ENCODE measurements at regions of chr16 and their contacts with region 1.

Region 1: GRCh38 chr16:55323637-55324490 is at the start of gene IRX6:
- DNase-seq: peak in 4 of 5 donors; percentile 65 to 91 (median 76)
- ATAC-seq: peak; percentile 71 to 85 (median 83)
- H3K4me3 ChIP-seq: peak within 1 kb of the TSS; percentile 30 to 70 (median 58)
- H3K27ac ChIP-seq: peak within 1 kb of the TSS; percentile 50 to 98 (median 92)
- H3K4me1 ChIP-seq: peaks cover 0 to 19% (median 1%) of the 10 kb centered on the region in 12 donors
- H3K27me3 ChIP-seq: peaks cover 0 to 66% (median 32%) of the 10 kb centered on the region in 9 donors
- CTCF ChIP-seq: peak; percentile 21 to 76 (median 62)
- POLR2A ChIP-seq: no peak
- total RNA-seq, gene IRX6: 0.96 to 48.4 (median 12.4) TPM

Region 2: GRCh38 chr16:54936979-54937670 is 386.7 kb before region 1 on chr16:
- intact Hi-C with region 1: loop called in 7 of 10 experiments (anchors 5 to 10 kb)
- DNase-seq: peak in 4 of 5 donors; percentile 48 to 69 (median 62)
- ATAC-seq: peak; percentile 25 to 74 (median 52)
- H3K4me3 ChIP-seq: peak overlapping the region; percentile 15 to 86 (median 72)
- H3K27ac ChIP-seq: peak overlapping the region; percentile 26 to 96 (median 69)
- H3K4me1 ChIP-seq: peaks cover 0 to 45% (median 22%) of the 10 kb centered on the region in 12 donors
- H3K27me3 ChIP-seq: peaks cover 12 to 98% (median 67%) of the 10 kb centered on the region in 9 donors
- CTCF ChIP-seq: peak; percentile 50 to 84 (median 66)
- POLR2A ChIP-seq: no peak

Region 3: GRCh38 chr16:55120408-55120807 is 203.5 kb before region 1 on chr16:
- intact Hi-C with region 1: loop called in 4 of 10 experiments (anchors 5 to 10 kb)
- DNase-seq: peak in 1 of 5 donors; percentile 38
- ATAC-seq: peak; percentile 40 to 89 (median 73)
- H3K4me3 ChIP-seq: no peak overlapping the region
- H3K27ac ChIP-seq: no peak overlapping the region
- H3K4me1 ChIP-seq: no peaks in the 10 kb centered on the region
- H3K27me3 ChIP-seq: no peaks in the 10 kb centered on the region
- CTCF ChIP-seq: peak in 7 of 12 donors; percentile 15 to 37 (median 21)
- POLR2A ChIP-seq: no peak

Region 4: GRCh38 chr16:55364811-55365210 is 40.9 kb after region 1 on chr16:
- intact Hi-C with region 1: loop called in 5 of 10 experiments (anchors 2 to 5 kb)
- DNase-seq: no peak
- ATAC-seq: no peak
- H3K4me3 ChIP-seq: no peak overlapping the region
- H3K27ac ChIP-seq: no peak overlapping the region
- H3K4me1 ChIP-seq: peaks cover 0 to 28% (median 19%) of the 10 kb centered on the region in 12 donors
- H3K27me3 ChIP-seq: peaks cover 0 to 12% (median 0%) of the 10 kb centered on the region in 9 donors
- CTCF ChIP-seq: no peak
- POLR2A ChIP-seq: no peak

Region 5: DNA sequence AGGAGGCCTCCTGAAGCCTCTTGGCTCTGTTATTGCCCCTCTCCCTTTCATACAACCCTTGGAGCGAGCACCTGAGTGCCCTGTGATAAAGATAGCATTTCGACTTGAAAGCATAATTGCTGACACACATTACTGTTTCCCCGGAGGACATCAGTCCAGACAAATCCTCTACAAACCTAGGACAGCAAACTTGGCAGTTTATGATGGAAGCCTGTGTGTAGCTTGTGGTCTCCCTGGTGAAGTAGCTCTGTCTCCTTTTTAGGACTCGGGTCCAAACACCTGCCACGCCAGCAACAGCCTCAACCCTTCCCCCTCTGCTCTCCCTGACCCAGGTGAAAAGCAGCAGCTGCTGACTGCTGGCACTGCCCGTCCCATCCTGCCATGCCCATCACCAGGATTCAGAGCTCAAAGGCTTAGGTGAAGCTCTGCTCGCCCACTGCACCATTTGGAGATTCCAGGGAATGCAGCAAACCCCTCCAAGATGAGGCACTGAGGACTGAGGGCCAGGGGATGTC is 56.1 kb after region 1 on chr16:
- intact Hi-C with region 1: no loop called
- DNase-seq: no peak
- ATAC-seq: peak; percentile 6 to 48 (median 18)
- H3K4me3 ChIP-seq: no peak overlapping the region
- H3K27ac ChIP-seq: peak overlapping the region in 8 of 12 donors; percentile 30 to 73 (median 56)
- H3K4me1 ChIP-seq: peaks cover 0 to 21% (median 5%) of the 10 kb centered on the region in 12 donors
- H3K27me3 ChIP-seq: no peaks in the 10 kb centered on the region
- CTCF ChIP-seq: no peak
- POLR2A ChIP-seq: no peak